ENCODE measurements at regions of chr6 and their contacts with region 1.

Region 1: DNA sequence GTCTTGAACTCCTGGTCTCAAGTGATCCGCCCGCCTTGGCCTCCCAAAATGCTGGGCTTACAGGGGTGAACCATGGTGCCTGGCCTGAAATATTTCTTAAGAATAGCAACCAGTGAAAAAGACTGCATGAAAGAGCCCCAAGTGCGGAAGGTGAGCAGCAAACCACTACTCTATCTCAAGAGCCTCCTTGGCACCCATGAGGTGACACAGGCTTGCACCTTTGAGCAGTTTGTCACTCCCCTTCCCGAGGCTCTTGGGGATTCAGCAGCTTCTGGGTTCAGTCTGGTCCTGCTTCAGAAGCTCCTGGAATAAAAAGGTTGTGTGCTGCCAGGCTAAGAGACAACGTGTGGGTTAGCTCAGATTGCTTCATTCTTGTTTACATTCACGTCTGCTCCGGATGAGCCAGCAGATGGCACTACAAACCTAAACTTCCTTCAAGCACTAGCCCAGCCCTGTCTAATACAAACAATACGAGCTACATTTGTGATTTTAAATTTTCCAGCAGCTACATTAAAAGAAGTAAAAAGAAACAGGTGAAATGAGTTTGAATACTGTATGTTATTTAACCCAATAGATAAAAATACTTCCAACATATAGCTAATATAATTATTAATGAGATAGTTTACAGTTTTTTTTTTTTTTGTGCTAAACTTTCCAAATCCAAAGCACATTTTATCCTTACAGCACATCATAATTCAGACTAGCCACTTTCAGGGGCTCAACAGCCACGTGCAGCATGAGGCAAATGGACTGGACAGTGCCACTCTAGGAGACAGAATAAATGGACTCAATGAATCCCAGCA is 46.2 kb downstream of the GJA10 start:
- DNase-seq: peak; percentile 77
- H3K4me3 ChIP-seq: no peak overlapping the region
- H3K27ac ChIP-seq: no peak overlapping the region
- H3K27me3 ChIP-seq: no peaks in the 10 kb centered on the region
- CTCF ChIP-seq: peak; percentile 81

Region 2: DNA sequence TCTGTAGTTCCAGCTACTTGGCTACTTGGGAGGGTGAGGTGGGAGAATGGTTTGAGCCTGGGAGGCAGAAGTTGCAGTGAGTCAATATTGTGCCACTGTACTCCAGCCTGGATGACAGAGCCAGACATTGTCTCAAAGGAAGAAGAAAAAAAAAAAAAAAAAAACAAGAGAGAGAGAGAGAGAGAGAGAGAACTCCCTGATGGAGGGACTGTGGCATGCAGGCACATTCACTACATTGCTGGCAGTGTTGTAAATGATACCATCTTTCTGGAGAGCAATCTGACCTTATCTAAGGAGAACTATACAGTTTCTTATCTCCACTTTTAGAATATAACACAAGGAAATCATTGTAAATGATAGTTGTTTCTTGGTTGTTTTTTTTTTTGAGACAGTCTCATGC is 205.9 kb before region 1 on chr6:
- CTCF ChIA-PET with region 1: no interaction called
- POLR2A ChIA-PET with region 1: no interaction called
- DNase-seq: no peak
- H3K4me3 ChIP-seq: no peak overlapping the region
- H3K27ac ChIP-seq: no peak overlapping the region
- H3K27me3 ChIP-seq: no peaks in the 10 kb centered on the region
- CTCF ChIP-seq: no peak

Region 3: GRCh38 chr6:89819336-89820130 is 120.9 kb before region 1 on chr6 and contains the start of gene MDN1:
- CTCF ChIA-PET with region 1: no interaction called
- POLR2A ChIA-PET with region 1: no interaction called
- DNase-seq: peak; percentile 82
- H3K4me3 ChIP-seq: peak within 1 kb of the TSS; percentile 98
- H3K27ac ChIP-seq: peak within 1 kb of the TSS; percentile 81
- H3K27me3 ChIP-seq: no peaks in the 10 kb centered on the region
- CTCF ChIP-seq: no peak
- polyA plus RNA-seq, gene MDN1: 14.6 and 15.8 TPM in 2 replicates

Region 4: DNA sequence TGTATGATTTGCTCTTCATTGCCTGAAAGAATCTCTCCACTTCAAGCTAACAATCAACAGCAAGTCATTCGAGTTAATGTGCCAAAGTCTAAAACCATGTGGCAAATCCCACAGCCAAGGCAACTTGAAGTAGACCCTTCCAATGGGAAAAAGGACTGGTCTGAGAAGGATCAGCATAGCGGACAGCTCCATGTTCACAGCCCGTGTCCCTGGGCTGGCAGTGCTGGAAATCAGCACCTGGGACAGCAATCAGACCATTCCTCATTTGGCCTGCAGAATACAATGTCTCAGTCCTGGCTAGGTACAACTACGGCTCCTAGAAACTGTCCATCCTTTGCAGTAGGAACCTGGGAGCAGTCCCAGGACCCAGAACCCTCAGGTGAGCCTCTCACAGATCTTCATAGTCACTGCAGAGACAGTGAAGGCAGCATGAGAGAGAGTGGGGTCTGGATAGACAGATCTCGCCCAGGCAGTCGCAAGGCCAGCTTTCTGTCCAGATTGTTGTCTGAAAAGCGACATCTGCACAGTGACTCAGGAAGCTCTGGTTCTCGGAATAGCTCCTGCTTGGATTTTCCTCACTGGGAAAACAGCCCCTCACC is 45.1 kb before region 1 on chr6:
- CTCF ChIA-PET with region 1: no interaction called
- POLR2A ChIA-PET with region 1: no interaction called
- DNase-seq: peak; percentile 20
- H3K4me3 ChIP-seq: no peak overlapping the region
- H3K27ac ChIP-seq: no peak overlapping the region
- H3K27me3 ChIP-seq: peaks cover 5% of the 10 kb centered on the region
- CTCF ChIP-seq: 0 out of 2 replicates have a peak, but pooled peaks have one; percentile 1

Region 5: GRCh38 chr6:89928604-89929003 is 11.8 kb before region 1 on chr6:
- CTCF ChIA-PET with region 1: interaction called, 33 read pairs
- POLR2A ChIA-PET with region 1: no interaction called
- DNase-seq: no peak
- H3K4me3 ChIP-seq: no peak overlapping the region
- H3K27ac ChIP-seq: no peak overlapping the region
- H3K27me3 ChIP-seq: no peaks in the 10 kb centered on the region
- CTCF ChIP-seq: no peak

Region 6: DNA sequence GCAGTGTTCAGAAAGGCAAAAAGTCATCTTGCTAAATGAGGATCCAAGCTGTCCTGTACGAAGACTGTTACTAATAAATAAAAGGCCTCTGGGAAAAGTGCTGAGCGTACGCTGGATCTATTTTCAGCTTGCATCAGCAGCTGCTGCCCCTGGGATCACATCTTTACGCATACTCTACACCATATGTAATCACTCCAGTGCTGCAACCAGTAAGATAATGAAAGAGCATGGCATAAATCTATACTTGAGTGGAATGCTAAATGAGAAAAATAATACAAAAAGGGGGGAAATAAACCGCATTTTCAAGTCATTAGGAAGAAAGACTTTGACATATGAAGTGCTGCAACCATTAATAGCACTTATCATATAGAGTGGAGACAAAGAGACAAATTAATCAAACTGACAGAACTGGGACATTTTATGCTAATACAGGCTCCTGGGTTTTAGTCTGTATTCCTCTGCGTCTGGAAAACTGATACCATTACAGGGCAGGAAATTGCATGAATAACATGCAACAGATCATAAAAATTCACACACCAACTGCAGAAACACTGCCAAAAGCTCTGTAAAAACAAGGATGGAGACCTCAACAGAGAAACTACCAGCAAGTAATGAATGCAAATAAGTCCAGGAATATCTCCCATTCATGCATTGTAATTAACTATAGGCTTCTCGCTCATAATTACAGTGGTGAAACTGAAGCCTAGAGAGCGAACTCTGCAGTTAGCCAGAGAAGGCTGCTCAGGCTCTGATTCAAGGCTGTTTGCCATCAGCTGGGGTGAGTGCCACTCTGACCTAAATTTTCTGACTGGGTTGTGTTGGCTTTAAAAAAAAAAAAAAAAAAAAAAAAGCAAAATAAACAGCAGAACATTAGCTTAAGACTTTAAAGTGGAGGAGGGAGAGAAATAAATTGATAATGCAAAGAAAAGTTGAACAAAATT is 37.7 kb after region 1 on chr6:
- CTCF ChIA-PET with region 1: interaction called, 28 read pairs
- POLR2A ChIA-PET with region 1: no interaction called
- DNase-seq: peak; percentile 69
- H3K4me3 ChIP-seq: no peak overlapping the region
- H3K27ac ChIP-seq: peak overlapping the region; percentile 73
- H3K27me3 ChIP-seq: no peaks in the 10 kb centered on the region
- CTCF ChIP-seq: no peak

Region 7: GRCh38 chr6:90216072-90216977 is 275.9 kb after region 1 on chr6:
- CTCF ChIA-PET with region 1: interaction called, 12 read pairs
- POLR2A ChIA-PET with region 1: interaction called, 3 read pairs
- DNase-seq: no peak
- H3K4me3 ChIP-seq: no peak overlapping the region
- H3K27ac ChIP-seq: no peak overlapping the region
- H3K27me3 ChIP-seq: no peaks in the 10 kb centered on the region
- CTCF ChIP-seq: no peak

Region 8: DNA sequence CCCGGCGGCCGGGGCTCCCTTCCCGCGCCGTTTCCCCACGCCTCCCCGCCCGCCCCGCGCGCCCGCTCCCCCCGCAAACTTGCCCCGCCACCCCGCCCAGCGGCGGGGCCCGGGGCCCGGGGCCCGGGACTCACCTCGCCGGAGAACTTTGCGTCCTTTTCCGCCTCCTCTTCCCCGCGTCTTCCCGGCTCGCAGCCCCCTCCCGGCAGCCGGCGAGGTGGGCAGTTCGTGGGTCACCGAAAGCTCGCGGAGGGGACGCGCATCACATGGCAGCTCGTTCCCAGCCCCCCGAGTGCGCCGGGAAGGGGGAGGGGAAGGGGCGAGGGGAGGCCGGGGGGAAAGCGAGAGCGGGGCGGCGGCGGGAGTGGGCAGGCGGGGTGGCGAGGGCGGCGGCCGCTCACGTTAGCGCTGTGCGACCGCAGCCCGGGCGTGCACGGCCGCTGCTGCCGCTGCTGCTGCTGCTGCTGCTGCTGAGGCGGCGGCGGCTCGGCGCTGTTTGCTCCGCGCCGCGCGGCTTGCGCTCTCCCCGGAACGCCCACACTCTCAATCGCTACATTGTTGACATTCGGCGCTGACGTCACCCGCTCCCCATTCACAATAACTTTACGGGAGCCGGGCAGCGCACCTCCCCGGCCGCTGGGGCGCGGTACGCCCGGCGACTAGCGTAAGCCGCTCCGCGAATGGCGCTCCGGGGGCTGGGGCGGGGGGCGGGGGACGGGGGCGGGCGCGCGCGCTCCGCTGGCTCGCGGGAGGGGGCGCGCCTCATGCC is 356.1 kb after region 1 on chr6 and contains the start of gene BACH2:
- CTCF ChIA-PET with region 1: interaction called, 23 read pairs
- POLR2A ChIA-PET with region 1: interaction called, 7 read pairs
- DNase-seq: peak; percentile 82
- H3K4me3 ChIP-seq: peak within 1 kb of the TSS; percentile 73
- H3K27ac ChIP-seq: peak within 1 kb of the TSS; percentile 39
- H3K27me3 ChIP-seq: peaks cover 8% of the 10 kb centered on the region
- CTCF ChIP-seq: peak; percentile 24; the same call in 1 of the 2 replicates
- polyA plus RNA-seq, gene BACH2: 2.2 and 2.3 TPM in 2 replicates

Region 9: DNA sequence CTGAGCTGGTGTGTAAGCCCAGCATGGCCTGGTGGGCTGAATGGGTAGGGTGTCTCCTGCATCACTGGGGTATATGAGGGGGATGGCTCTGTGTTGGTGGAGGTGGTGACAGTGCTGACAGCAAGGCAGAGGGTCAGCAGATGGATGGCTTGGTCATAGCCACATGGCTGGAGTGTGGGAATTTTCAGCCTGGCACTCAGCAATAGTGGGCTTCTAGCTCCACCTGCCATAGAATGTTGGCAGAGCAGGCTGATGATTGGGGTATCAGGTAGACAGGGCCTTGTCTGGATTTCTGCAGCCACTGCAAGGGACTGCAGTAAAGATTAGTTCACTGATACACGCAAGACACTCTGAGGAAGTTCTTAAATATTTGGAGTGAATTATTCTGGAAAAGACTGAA is 493.7 kb after region 1 on chr6:
- CTCF ChIA-PET with region 1: interaction called, 11 read pairs
- POLR2A ChIA-PET with region 1: no interaction called
- DNase-seq: no peak
- H3K4me3 ChIP-seq: no peak overlapping the region
- H3K27ac ChIP-seq: no peak overlapping the region
- H3K27me3 ChIP-seq: peaks cover 2% of the 10 kb centered on the region
- CTCF ChIP-seq: peak; percentile 24; the same call in 1 of the 2 replicates

Region 10: DNA sequence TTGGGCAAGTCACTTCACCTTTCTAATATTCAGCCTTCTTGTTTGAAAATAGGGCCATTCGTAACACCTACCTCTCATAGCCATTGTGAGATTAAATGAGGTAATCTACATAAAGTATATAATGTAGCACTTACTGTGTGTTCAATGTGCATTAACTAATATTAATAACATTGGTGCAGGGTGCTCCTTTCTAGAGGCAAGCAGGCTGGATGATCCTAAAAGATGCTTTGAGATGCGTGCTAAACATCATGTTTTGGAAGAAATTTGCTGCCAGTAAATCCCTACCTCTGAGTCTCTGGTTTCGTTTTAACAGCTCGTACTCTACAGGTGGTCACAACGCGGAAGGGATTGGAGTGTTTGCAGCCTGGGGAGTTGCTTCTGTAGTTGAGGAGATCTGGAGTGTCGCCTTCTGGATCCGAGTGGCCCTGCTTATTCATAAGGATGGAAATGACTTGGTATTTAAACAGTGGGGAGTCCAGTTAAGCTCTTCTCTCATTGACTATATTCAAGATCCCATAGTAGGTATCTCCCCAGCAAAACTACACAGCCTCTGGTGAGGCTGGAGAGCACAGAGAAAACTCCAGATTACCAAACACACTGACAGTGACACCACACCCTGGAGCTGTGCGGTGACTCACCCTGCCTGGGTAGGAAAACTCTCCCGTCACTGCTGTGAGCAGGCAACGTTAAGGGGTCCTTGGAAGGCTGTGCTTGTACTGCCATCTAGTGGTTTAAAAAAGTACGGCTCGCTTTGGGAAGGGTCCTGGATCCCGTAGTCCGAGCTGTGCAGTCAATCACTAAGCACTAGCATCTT is 538.6 kb after region 1 on chr6:
- CTCF ChIA-PET with region 1: interaction called, 272 read pairs
- POLR2A ChIA-PET with region 1: interaction called, 5 read pairs
- DNase-seq: peak; percentile 89
- H3K4me3 ChIP-seq: no peak overlapping the region
- H3K27ac ChIP-seq: no peak overlapping the region
- H3K27me3 ChIP-seq: no peaks in the 10 kb centered on the region
- CTCF ChIP-seq: peak; percentile 93